Colonic mucosa (tissue), 4 donors: ENCODE measurements at regions of chrX and their contacts with region 1.

Region 1: GRCh38 chrX:1391707-1392375 is at the start of gene SLC25A6:
- DNase-seq: peak; percentile 99
- H3K4me3 ChIP-seq: peak within 1 kb of the TSS; percentile 93
- H3K27ac ChIP-seq: peak within 1 kb of the TSS; percentile 96
- H3K4me1 ChIP-seq: peaks cover 5% of the 10 kb centered on the region
- H3K27me3 ChIP-seq: no peaks in the 10 kb centered on the region
- CTCF ChIP-seq: no peak
- total RNA-seq, gene SLC25A6: 419 to 474 TPM

Region 2: GRCh38 chrX:1591102-1591900 is 199.5 kb after region 1 on chrX and contains the start of gene AKAP17A:
- intact Hi-C with region 1: loop called (anchors 10 kb)
- DNase-seq: peak; percentile 98
- H3K4me3 ChIP-seq: peak within 1 kb of the TSS; percentile 80
- H3K27ac ChIP-seq: peak within 1 kb of the TSS; percentile 37
- H3K4me1 ChIP-seq: peaks cover 7% of the 10 kb centered on the region
- H3K27me3 ChIP-seq: no peaks in the 10 kb centered on the region
- CTCF ChIP-seq: no peak
- total RNA-seq, gene AKAP17A: 42.4 to 44.6 TPM